ENCODE measurements at regions of chr1 and their contacts with region 1.

Region 1: DNA sequence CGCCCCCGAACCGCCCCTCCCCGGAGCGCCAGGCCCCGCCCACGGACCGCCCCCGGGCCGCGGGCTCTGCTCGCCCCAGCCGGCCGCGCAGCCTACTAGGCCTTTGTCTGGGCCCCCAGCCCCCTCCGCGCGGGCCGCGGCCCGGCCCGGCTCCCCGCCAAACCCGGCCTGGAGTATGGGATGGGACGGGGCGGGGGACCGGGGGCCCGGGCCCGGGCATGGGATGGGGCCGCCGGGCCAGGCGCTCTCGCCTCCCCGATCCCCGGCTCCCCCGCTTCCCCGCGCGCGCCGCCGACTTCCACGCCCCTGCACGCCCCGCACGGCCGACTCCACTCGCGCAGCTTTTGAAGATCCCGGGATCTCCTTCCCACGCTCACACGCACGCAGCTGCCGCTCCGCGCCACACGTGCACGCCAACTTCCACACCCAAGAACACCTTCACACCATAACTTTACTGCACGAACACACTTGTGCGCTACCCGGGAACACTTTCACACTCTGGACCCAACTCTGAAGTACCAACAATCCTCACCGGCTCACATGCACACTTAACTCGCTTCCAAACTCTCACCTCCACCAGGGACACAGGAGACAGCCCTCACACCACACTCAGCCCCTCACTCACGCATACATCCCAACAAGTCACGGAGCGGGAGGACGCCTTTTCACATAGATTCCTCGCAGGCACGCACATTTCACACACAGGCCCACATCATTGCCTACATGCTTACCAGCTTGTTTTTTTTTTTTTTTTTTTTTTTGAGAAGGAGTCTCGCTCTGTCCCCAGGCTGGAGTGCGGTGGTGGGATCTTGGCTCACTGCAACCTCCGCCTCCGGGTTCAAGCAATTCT is 487 bp upstream of the HSPG2 start:
- DNase-seq: peak; percentile 49 to 79 (median 61)
- ATAC-seq: peak; percentile 96
- H3K4me3 ChIP-seq: peak overlapping the region; percentile 47
- H3K4me3 Mint-ChIP-seq: peak overlapping the region; percentile 81 to 97 (median 92)
- H3K27ac ChIP-seq: peak overlapping the region; percentile 60
- H3K27ac Mint-ChIP-seq: peak overlapping the region; percentile 46 to 95 (median 85)
- H3K4me1 ChIP-seq: peaks cover 0 to 25% of the 10 kb centered on the region in 2 donors
- H3K4me1 Mint-ChIP-seq: peaks cover 13 to 42% (median 23%) of the 10 kb centered on the region in 7 donors
- H3K27me3 ChIP-seq: no peaks in the 10 kb centered on the region
- H3K27me3 Mint-ChIP-seq: peaks cover 0 to 44% (median 0%) of the 10 kb centered on the region in 5 donors

Region 2: GRCh38 chr1:21814241-21814918 is 123.2 kb before region 1 on chr1:
- CTCF ChIA-PET with region 1: no interaction called
- POLR2A ChIA-PET with region 1: no interaction called
- intact Hi-C with region 1: loop called in 1 of 2 experiments (anchors 10 kb)
- DNase-seq: peak in 6 of 9 donors; percentile 19 to 46 (median 28)
- ATAC-seq: peak; percentile 80
- H3K4me3 ChIP-seq: peak overlapping the region; percentile 33
- H3K4me3 Mint-ChIP-seq: peak overlapping the region; percentile 45 to 84 (median 71)
- H3K27ac ChIP-seq: no peak overlapping the region
- H3K27ac Mint-ChIP-seq: no peak overlapping the region
- H3K4me1 ChIP-seq: no peaks in the 10 kb centered on the region
- H3K4me1 Mint-ChIP-seq: peaks cover 5 to 14% (median 8%) of the 10 kb centered on the region in 7 donors
- H3K27me3 ChIP-seq: peaks cover 0 to 4% of the 10 kb centered on the region in 2 donors
- H3K27me3 Mint-ChIP-seq: peaks cover 10 to 31% (median 15%) of the 10 kb centered on the region in 5 donors

Region 3: DNA sequence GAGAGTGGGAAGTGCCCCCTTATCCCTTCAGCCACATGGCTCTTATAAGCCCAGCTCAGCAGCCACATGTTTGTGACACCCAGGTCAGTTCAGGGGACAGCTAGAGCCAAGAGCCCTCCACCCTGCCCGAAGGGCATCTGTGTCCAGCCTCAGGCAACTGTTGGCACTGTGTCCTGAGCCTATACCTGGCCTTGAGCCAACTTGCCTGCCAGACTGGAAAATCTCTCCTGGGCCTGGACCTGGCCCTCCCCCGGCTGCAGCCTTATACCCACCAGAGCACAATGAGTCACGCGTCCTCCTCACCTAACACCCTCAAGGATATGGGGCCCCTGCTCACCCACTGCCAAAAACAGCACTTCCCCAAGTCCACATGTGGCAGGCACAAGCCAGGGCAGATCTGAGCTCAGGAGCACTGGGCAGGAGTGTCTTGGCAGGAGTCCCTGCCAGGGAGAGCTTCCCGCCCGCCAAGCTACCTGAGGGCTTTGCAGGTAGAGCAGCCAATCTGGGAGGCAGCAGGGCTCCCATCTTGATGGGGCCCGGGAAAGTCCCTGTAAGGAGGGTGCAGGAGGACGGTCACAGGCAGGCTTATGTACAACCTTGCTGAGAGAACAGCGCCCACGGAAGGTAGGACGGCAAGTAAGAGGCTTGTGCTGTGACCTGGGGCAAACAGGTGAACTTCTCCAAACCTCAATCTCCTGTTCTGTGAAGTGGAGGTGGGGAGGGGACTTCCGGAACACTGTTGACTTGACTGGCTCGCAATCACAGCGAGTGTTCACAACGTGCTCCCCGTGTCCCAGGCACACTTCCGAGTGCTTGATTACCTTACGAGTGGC is 19.3 kb after region 1 on chr1:
- CTCF ChIA-PET with region 1: interaction called, 3 read pairs
- POLR2A ChIA-PET with region 1: interaction called, 5 read pairs
- intact Hi-C with region 1: loop called in 1 of 2 experiments (anchors 1 kb)
- DNase-seq: peak; percentile 21 to 84 (median 76)
- ATAC-seq: peak; percentile 96
- H3K4me3 ChIP-seq: peak overlapping the region; percentile 43
- H3K4me3 Mint-ChIP-seq: peak overlapping the region; percentile 65 to 86 (median 80)
- H3K27ac ChIP-seq: peak overlapping the region; percentile 62
- H3K27ac Mint-ChIP-seq: peak overlapping the region; percentile 77 to 99 (median 93)
- H3K4me1 ChIP-seq: peaks cover 8 to 31% of the 10 kb centered on the region in 2 donors
- H3K4me1 Mint-ChIP-seq: peaks cover 17 to 44% (median 29%) of the 10 kb centered on the region in 7 donors
- H3K27me3 ChIP-seq: no peaks in the 10 kb centered on the region
- H3K27me3 Mint-ChIP-seq: peaks cover 0 to 7% (median 2%) of the 10 kb centered on the region in 5 donors